ENCODE measurements at regions of chr17 and their contacts with region 1.

Region 1: GRCh38 chr17:37506678-37507077 is 17.0 kb downstream of the DUSP14 start:
- DNase-seq: no peak
- ATAC-seq: peak; percentile 95
- H3K4me3 ChIP-seq: no peak overlapping the region
- H3K27ac ChIP-seq: no peak overlapping the region
- H3K4me1 ChIP-seq: no peaks in the 10 kb centered on the region
- H3K27me3 ChIP-seq: no peaks in the 10 kb centered on the region
- CTCF ChIP-seq: peak; percentile 21 to 60 (median 48)
- EP300 ChIP-seq: no peak
- POLR2A ChIP-seq: no peak
- RAD21 ChIP-seq: 0 out of 2 replicates have a peak, but pooled peaks have one; percentile 2

Region 2: GRCh38 chr17:37406635-37407461 is 99.8 kb before region 1 on chr17 and contains the starts of genes ACACA and TADA2A:
- CTCF ChIA-PET with region 1: no interaction called
- POLR2A ChIA-PET with region 1: no interaction called
- RAD21 ChIA-PET with region 1: no interaction called
- SMC1A ChIA-PET with region 1: no interaction called
- in situ Hi-C with region 1: no loop called
- intact Hi-C with region 1: no loop called
- DNase-seq: no peak
- ATAC-seq: peak; percentile 95
- H3K4me3 ChIP-seq: peak within 1 kb of the TSS; percentile 96
- H3K27ac ChIP-seq: peak within 1 kb of the TSS; percentile 95
- H3K4me1 ChIP-seq: peaks cover 21% of the 10 kb centered on the region
- H3K27me3 ChIP-seq: no peaks in the 10 kb centered on the region
- CTCF ChIP-seq: no peak
- EP300 ChIP-seq: no peak
- POLR2A ChIP-seq: peak; percentile 84
- RAD21 ChIP-seq: no peak
- polyA plus RNA-seq, gene ACACA: 12.9 to 14.7 TPM
- polyA plus RNA-seq, gene TADA2A: 39.9 to 43.8 TPM

Region 3: GRCh38 chr17:38397227-38397626 is 890.5 kb after region 1 on chr17:
- CTCF ChIA-PET with region 1: no interaction called
- POLR2A ChIA-PET with region 1: no interaction called
- RAD21 ChIA-PET with region 1: no interaction called
- SMC1A ChIA-PET with region 1: no interaction called
- in situ Hi-C with region 1: loop called (anchors 25 kb)
- intact Hi-C with region 1: no loop called
- DNase-seq: no peak
- ATAC-seq: no peak
- H3K4me3 ChIP-seq: no peak overlapping the region
- H3K27ac ChIP-seq: no peak overlapping the region
- H3K4me1 ChIP-seq: no peaks in the 10 kb centered on the region
- H3K27me3 ChIP-seq: no peaks in the 10 kb centered on the region
- CTCF ChIP-seq: no peak
- EP300 ChIP-seq: no peak
- POLR2A ChIP-seq: no peak
- RAD21 ChIP-seq: no peak